ENCODE measurements at regions of chr7 and their contacts with region 1.

Region 1: GRCh38 chr7:17952387-17952786 is 12.1 kb upstream of the SNX13 start:
- DNase-seq: peak in 1 of 9 experiments; percentile 17
- ATAC-seq: no peak
- H3K4me3 ChIP-seq: no peak overlapping the region
- H3K4me3 Mint-ChIP-seq: peak overlapping the region; percentile 46
- H3K27ac ChIP-seq: no peak overlapping the region
- H3K27ac Mint-ChIP-seq: no peak overlapping the region
- H3K4me1 ChIP-seq: no peaks in the 10 kb centered on the region
- H3K4me1 Mint-ChIP-seq: peaks cover 4% of the 10 kb centered on the region
- H3K27me3 ChIP-seq: peaks cover 0 to 2% of the 10 kb centered on the region in 2 experiments
- H3K27me3 Mint-ChIP-seq: peaks cover 3% of the 10 kb centered on the region
- CTCF ChIP-seq: no peak

Region 2: GRCh38 chr7:17882685-17883084 is 69.7 kb before region 1 on chr7:
- CTCF ChIA-PET with region 1: no interaction called
- POLR2A ChIA-PET with region 1: no interaction called
- intact Hi-C with region 1: no loop called
- DNase-seq: no peak
- ATAC-seq: no peak
- H3K4me3 ChIP-seq: no peak overlapping the region
- H3K4me3 Mint-ChIP-seq: no peak overlapping the region
- H3K27ac ChIP-seq: no peak overlapping the region
- H3K27ac Mint-ChIP-seq: no peak overlapping the region
- H3K4me1 ChIP-seq: no peaks in the 10 kb centered on the region
- H3K4me1 Mint-ChIP-seq: no peaks in the 10 kb centered on the region
- H3K27me3 ChIP-seq: no peaks in the 10 kb centered on the region
- H3K27me3 Mint-ChIP-seq: no peaks in the 10 kb centered on the region
- CTCF ChIP-seq: no peak

Region 3: DNA sequence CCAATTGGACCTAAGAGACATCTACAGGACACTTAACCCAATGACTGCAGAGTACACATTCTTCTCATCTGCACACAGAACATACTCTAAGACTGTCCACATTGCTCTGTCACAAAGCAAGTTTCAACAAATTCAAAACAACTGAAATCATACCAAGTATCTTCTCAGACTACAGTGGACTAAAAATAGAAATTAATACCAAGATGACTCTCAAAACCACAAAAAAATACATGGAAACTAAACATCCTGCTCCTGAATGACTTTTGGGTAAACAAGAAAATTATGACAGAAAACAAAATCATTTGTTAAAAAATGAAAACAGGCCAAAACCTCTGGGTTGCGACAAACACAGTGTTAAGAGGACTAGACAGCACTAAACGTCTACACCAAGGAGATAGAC is 36.6 kb before region 1 on chr7:
- CTCF ChIA-PET with region 1: no interaction called
- POLR2A ChIA-PET with region 1: no interaction called
- intact Hi-C with region 1: loop called in 1 of 2 experiments (anchors 5 kb)
- DNase-seq: no peak
- ATAC-seq: no peak
- H3K4me3 ChIP-seq: no peak overlapping the region
- H3K4me3 Mint-ChIP-seq: no peak overlapping the region
- H3K27ac ChIP-seq: no peak overlapping the region
- H3K27ac Mint-ChIP-seq: no peak overlapping the region
- H3K4me1 ChIP-seq: no peaks in the 10 kb centered on the region
- H3K4me1 Mint-ChIP-seq: peaks cover 29% of the 10 kb centered on the region
- H3K27me3 ChIP-seq: no peaks in the 10 kb centered on the region
- H3K27me3 Mint-ChIP-seq: no peaks in the 10 kb centered on the region
- CTCF ChIP-seq: no peak

Region 4: DNA sequence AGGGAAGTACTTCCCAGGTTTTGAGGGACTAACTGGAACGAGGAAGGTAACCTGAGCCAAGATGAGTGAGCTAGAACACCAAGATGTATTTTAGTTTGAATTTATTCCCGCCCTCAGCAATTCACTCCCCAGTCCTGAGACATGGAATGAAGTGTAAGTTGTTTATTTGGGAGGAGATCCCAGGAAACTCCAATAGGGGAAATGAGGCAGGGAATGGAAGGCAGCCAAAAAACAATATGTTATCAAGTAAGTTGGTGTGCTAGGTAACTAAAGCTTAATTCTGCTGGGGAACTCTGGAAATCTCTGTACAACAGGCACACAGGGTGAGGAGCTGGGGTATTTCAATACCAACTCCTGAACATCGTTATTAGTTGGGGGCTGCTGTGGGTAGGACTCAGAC is 353.5 kb after region 1 on chr7:
- CTCF ChIA-PET with region 1: no interaction called
- POLR2A ChIA-PET with region 1: no interaction called
- intact Hi-C with region 1: no loop called
- DNase-seq: no peak
- ATAC-seq: no peak
- H3K4me3 ChIP-seq: no peak overlapping the region
- H3K4me3 Mint-ChIP-seq: no peak overlapping the region
- H3K27ac ChIP-seq: no peak overlapping the region
- H3K27ac Mint-ChIP-seq: no peak overlapping the region
- H3K4me1 ChIP-seq: no peaks in the 10 kb centered on the region
- H3K4me1 Mint-ChIP-seq: no peaks in the 10 kb centered on the region
- H3K27me3 ChIP-seq: no peaks in the 10 kb centered on the region
- H3K27me3 Mint-ChIP-seq: no peaks in the 10 kb centered on the region
- CTCF ChIP-seq: no peak